Activated B cell treated with CpG ODN at 0.5 μM for 24 hours (primary cell): ENCODE measurements at regions of chr3 and their contacts with region 1.

Region 1: DNA sequence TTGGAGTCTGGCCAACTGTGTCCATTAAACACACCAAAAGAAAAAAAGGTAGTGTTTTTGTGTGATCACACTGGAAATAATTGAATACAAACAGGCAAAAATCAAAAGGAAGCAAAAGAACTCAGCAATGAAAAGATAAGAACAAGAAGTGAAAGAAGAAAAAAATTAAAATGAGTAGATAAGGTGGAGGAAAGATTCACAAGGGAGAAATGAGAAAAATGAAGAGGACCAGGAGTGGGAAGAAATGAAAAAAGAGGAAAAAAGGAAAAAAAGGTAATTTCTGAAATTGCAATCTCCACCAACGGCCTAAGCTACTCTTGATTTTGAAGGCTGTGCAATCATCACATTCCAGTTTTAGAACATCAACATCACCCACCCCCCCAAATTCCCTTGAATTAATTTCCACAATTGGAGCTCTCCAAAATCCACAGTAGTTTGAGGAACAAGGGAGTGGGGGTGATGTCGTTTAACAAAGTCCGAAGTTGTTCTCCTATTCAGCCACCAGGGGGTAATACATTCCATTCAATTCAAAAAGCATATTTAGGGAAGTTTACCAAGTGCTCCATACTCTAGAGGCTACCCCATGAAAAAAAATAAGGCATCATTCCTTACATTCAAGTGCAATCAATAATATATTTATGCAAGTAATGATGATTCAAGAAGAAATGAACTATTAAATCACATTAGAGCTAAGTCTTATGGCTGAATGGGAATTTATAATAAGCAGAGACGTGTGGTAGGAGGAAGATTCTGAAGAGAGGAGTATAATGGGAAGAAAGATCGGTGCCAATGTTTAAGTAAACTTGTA is 37.4 kb downstream of the ZNF860 start:
- DNase-seq: no peak
- ATAC-seq: peak; percentile 65
- H3K4me3 Mint-ChIP-seq: no peak overlapping the region
- H3K27ac Mint-ChIP-seq: no peak overlapping the region
- H3K4me1 Mint-ChIP-seq: peaks cover 12% of the 10 kb centered on the region
- H3K27me3 Mint-ChIP-seq: no peaks in the 10 kb centered on the region
- CTCF ChIP-seq: no peak

Region 2: GRCh38 chr3:31800436-31800835 is 218.5 kb before region 1 on chr3:
- CTCF ChIA-PET with region 1: no interaction called
- POLR2A ChIA-PET with region 1: no interaction called
- intact Hi-C with region 1: no loop called
- DNase-seq: no peak
- ATAC-seq: no peak
- H3K4me3 Mint-ChIP-seq: no peak overlapping the region
- H3K27ac Mint-ChIP-seq: peak overlapping the region; percentile 12
- H3K4me1 Mint-ChIP-seq: peaks cover 44% of the 10 kb centered on the region
- H3K27me3 Mint-ChIP-seq: no peaks in the 10 kb centered on the region
- CTCF ChIP-seq: no peak

Region 3: GRCh38 chr3:31858439-31858838 is 160.5 kb before region 1 on chr3:
- CTCF ChIA-PET with region 1: interaction called, 13 read pairs
- POLR2A ChIA-PET with region 1: no interaction called
- intact Hi-C with region 1: no loop called
- DNase-seq: no peak
- ATAC-seq: peak; percentile 69
- H3K4me3 Mint-ChIP-seq: no peak overlapping the region
- H3K27ac Mint-ChIP-seq: peak overlapping the region; percentile 71
- H3K4me1 Mint-ChIP-seq: peaks cover 74% of the 10 kb centered on the region
- H3K27me3 Mint-ChIP-seq: no peaks in the 10 kb centered on the region
- CTCF ChIP-seq: no peak

Region 4: GRCh38 chr3:32138545-32139104 is 119.7 kb after region 1 on chr3:
- CTCF ChIA-PET with region 1: interaction called, 19 read pairs
- POLR2A ChIA-PET with region 1: interaction called, 3 read pairs
- intact Hi-C with region 1: no loop called
- DNase-seq: no peak
- ATAC-seq: peak; percentile 34
- H3K4me3 Mint-ChIP-seq: no peak overlapping the region
- H3K27ac Mint-ChIP-seq: peak overlapping the region; percentile 30
- H3K4me1 Mint-ChIP-seq: peaks cover 20% of the 10 kb centered on the region
- H3K27me3 Mint-ChIP-seq: no peaks in the 10 kb centered on the region
- CTCF ChIP-seq: no peak

Region 5: GRCh38 chr3:32226870-32227500 is 208.0 kb after region 1 on chr3:
- CTCF ChIA-PET with region 1: no interaction called
- POLR2A ChIA-PET with region 1: no interaction called
- intact Hi-C with region 1: no loop called
- DNase-seq: no peak
- ATAC-seq: no peak
- H3K4me3 Mint-ChIP-seq: no peak overlapping the region
- H3K27ac Mint-ChIP-seq: no peak overlapping the region
- H3K4me1 Mint-ChIP-seq: no peaks in the 10 kb centered on the region
- H3K27me3 Mint-ChIP-seq: peaks cover 9% of the 10 kb centered on the region
- CTCF ChIP-seq: no peak